ENCODE measurements at regions of chr1 and their contacts with region 1.

Region 1: GRCh38 chr1:30911046-30911954 is 2.7 kb upstream of the SDC3 start:
- DNase-seq: peak; percentile 64
- H3K4me3 ChIP-seq: no peak overlapping the region
- H3K27ac ChIP-seq: no peak overlapping the region
- H3K4me1 ChIP-seq: peaks cover 31% of the 10 kb centered on the region
- H3K27me3 ChIP-seq: no peaks in the 10 kb centered on the region
- CTCF ChIP-seq: peak; percentile 77 to 91

Region 2: GRCh38 chr1:30779294-30780071 is 131.8 kb before region 1 on chr1:
- CTCF ChIA-PET with region 1: interaction called, 8 read pairs
- dilution Hi-C with region 1: no loop called
- in situ Hi-C with region 1: no loop called
- intact Hi-C with region 1: loop called (anchors 1 kb)
- DNase-seq: peak; percentile 65
- H3K4me3 ChIP-seq: no peak overlapping the region
- H3K27ac ChIP-seq: no peak overlapping the region
- H3K4me1 ChIP-seq: peaks cover 9% of the 10 kb centered on the region
- H3K27me3 ChIP-seq: no peaks in the 10 kb centered on the region
- CTCF ChIP-seq: peak; percentile 78 to 97

Region 3: GRCh38 chr1:30801771-30802198 is 109.5 kb before region 1 on chr1:
- CTCF ChIA-PET with region 1: interaction called, 5 read pairs
- dilution Hi-C with region 1: loop called (anchors 5 kb)
- in situ Hi-C with region 1: loop called (anchors 5 kb)
- intact Hi-C with region 1: loop called (anchors 1 kb)
- DNase-seq: peak; percentile 32
- H3K4me3 ChIP-seq: no peak overlapping the region
- H3K27ac ChIP-seq: no peak overlapping the region
- H3K4me1 ChIP-seq: peaks cover 16% of the 10 kb centered on the region
- H3K27me3 ChIP-seq: no peaks in the 10 kb centered on the region
- CTCF ChIP-seq: peak; percentile 77 to 99

Region 4: GRCh38 chr1:30856260-30856790 is 55.0 kb before region 1 on chr1:
- CTCF ChIA-PET with region 1: no interaction called
- dilution Hi-C with region 1: no loop called
- in situ Hi-C with region 1: no loop called
- intact Hi-C with region 1: loop called (anchors 5 kb)
- DNase-seq: no peak
- H3K4me3 ChIP-seq: no peak overlapping the region
- H3K27ac ChIP-seq: no peak overlapping the region
- H3K4me1 ChIP-seq: peaks cover 12% of the 10 kb centered on the region
- H3K27me3 ChIP-seq: peaks cover 2% of the 10 kb centered on the region
- CTCF ChIP-seq: peak in 1 of 2 donors; percentile 4

Region 5: DNA sequence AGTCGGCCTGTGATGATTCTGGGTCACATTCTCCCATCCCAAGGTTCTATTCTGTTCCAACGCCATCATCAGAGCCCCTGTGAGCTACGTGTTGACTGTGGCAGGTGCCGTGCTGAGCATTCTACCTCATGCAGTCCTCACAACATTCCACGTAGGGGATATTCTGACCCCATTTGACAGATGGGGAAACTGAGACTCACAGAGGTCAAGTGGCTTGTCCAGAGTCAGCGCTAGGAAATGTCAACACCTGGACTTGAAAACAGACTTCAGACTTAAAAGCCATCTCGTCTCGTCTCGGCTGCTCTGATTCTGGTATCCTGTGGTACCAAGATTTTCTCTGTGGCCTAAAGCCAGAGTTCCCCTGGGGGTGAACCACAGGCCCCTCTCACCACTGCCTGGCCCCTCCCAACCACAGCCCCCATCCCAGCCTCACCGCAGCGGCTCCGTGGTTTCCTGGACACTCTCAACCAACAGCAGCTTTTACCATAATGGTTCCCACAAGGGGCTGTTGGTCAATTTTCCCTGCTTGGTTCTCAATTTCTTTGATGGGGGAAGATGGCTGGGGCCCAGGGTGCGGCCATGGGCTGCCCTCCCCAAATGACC is 42.4 kb before region 1 on chr1:
- CTCF ChIA-PET with region 1: no interaction called
- dilution Hi-C with region 1: loop called (anchors 5 kb)
- in situ Hi-C with region 1: no loop called
- intact Hi-C with region 1: no loop called
- DNase-seq: no peak
- H3K4me3 ChIP-seq: no peak overlapping the region
- H3K27ac ChIP-seq: no peak overlapping the region
- H3K4me1 ChIP-seq: no peaks in the 10 kb centered on the region
- H3K27me3 ChIP-seq: no peaks in the 10 kb centered on the region
- CTCF ChIP-seq: no peak

Measured in mammary epithelial cell (primary cell).